Breast epithelium (tissue), 4 donors: ENCODE measurements at regions of chr1 and their contacts with region 1.

Region 1: DNA sequence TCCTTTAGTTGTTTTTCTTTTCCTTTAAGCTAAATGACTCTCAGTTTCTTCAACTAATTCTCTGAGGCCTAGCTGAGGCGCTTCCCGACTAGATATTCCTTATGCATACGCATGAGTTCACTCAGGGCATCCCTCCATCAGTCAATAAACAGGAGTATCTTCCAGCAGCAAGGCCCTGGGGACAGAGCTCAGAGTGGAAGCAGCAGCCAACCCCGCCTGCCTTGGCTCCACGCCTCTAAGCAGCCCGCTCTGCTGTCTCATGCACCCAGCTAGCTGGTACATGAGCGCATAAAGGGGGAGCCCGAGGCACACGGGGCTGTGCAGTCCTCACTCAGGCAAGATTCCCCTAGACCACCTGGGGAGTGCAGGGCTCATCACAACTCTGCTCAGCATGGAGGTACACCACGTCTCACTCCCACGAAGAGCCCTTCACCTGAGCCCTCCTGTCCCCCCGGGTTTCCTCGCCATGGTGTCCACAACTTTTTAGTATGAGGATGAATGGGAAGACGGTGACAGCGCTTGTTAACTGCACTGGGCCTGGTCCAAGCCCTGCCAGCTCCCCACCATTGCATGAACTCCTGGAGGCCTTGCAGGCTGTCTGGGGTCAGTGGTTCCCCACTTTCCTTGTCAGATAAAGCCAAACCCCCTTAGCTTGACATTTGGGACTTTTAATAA is 11.6 kb downstream of the TMEM9 start:
- DNase-seq: no peak
- H3K4me3 ChIP-seq: no peak overlapping the region
- H3K27ac ChIP-seq: no peak overlapping the region
- H3K4me1 ChIP-seq: no peaks in the 10 kb centered on the region
- H3K27me3 ChIP-seq: no peaks in the 10 kb centered on the region
- CTCF ChIP-seq: no peak
- POLR2A ChIP-seq: no peak

Region 2: GRCh38 chr1:201105640-201106039 is 37.0 kb before region 1 on chr1:
- intact Hi-C with region 1: loop called (anchors 2 kb)
- DNase-seq: no peak
- H3K4me3 ChIP-seq: no peak overlapping the region
- H3K27ac ChIP-seq: no peak overlapping the region
- H3K4me1 ChIP-seq: no peaks in the 10 kb centered on the region
- H3K27me3 ChIP-seq: no peaks in the 10 kb centered on the region
- CTCF ChIP-seq: no peak
- POLR2A ChIP-seq: no peak

Region 3: DNA sequence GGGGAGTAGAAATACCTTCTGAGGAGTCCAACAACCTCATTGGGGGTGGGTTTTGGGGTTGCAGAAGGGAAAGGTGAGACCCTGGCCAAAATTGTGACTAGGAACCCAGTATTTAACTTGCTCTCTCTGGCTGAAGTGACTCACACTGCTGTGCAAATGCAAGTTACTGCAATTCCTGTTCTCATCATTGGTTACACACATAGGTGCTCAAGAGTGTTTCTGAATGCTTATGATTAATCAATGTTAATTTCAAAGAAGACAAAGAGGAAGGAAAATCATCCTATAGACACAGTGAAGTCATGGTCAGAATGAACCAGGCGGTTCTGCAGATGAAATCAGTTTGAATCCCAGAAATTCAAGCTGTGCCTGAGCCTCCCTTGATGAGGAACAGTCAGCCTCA is 18.8 kb before region 1 on chr1:
- intact Hi-C with region 1: loop called (anchors 1 kb)
- DNase-seq: no peak
- H3K4me3 ChIP-seq: no peak overlapping the region
- H3K27ac ChIP-seq: no peak overlapping the region
- H3K4me1 ChIP-seq: no peaks in the 10 kb centered on the region
- H3K27me3 ChIP-seq: no peaks in the 10 kb centered on the region
- CTCF ChIP-seq: no peak
- POLR2A ChIP-seq: no peak